Caco-2 (cell line): ENCODE measurements at regions of chr6 and their contacts with region 1.

Region 1: DNA sequence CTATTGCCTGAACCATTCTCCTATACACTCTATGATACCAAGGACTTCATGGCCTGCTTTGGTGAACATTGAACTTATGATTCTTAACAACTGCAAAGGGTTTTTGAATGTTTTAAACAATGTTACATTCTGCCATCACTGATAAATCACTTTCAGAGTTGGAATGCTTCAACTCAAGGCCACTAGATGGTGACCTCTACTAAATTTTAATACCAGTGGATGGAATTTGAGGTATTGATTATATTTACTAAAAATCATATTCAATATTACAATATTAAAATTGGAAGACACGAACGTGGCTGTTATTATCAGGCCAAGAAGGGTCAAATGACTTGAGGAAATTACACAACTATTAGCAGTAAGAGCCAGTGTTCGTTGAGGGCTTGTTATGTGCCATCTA is 18.6 kb downstream of the MYCT1 start:
- DNase-seq: no peak
- H3K4me3 ChIP-seq: no peak overlapping the region
- H3K4me3 Mint-ChIP-seq: no peak overlapping the region
- H3K27ac Mint-ChIP-seq: no peak overlapping the region
- H3K4me1 ChIP-seq: no peaks in the 10 kb centered on the region
- H3K4me1 Mint-ChIP-seq: no peaks in the 10 kb centered on the region
- H3K27me3 ChIP-seq: no peaks in the 10 kb centered on the region
- H3K27me3 Mint-ChIP-seq: no peaks in the 10 kb centered on the region
- CTCF ChIP-seq: no peak

Region 2: DNA sequence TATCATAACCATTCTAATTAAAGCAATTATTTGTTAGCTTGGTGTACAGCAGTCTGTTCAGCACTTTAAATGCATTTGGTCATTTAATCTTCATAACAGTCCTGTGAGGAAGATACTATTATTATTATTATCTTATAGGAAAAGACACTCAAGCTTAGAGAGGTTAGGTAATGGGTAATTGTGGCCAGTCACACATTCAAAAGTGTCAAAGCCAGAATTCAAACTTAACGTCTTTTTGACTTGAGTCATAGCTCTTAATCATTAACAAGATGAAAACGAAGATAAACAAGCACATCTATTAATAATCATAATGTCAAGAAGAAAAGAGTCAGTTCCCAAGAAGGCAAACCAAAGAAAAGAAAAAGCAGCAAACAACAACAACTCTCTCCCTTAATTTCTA is 330.2 kb before region 1 on chr6:
- CTCF ChIA-PET with region 1: no interaction called
- POLR2A ChIA-PET with region 1: no interaction called
- intact Hi-C with region 1: no loop called
- DNase-seq: no peak
- H3K4me3 ChIP-seq: no peak overlapping the region
- H3K4me3 Mint-ChIP-seq: no peak overlapping the region
- H3K27ac Mint-ChIP-seq: no peak overlapping the region
- H3K4me1 ChIP-seq: peaks cover 7% of the 10 kb centered on the region; the same call in 1 of the 2 replicates
- H3K4me1 Mint-ChIP-seq: no peaks in the 10 kb centered on the region
- H3K27me3 ChIP-seq: no peaks in the 10 kb centered on the region
- H3K27me3 Mint-ChIP-seq: peaks cover 9% of the 10 kb centered on the region
- CTCF ChIP-seq: no peak

Region 3: GRCh38 chr6:152661776-152662175 is 54.5 kb before region 1 on chr6:
- CTCF ChIA-PET with region 1: no interaction called
- POLR2A ChIA-PET with region 1: no interaction called
- intact Hi-C with region 1: no loop called
- DNase-seq: no peak
- H3K4me3 ChIP-seq: no peak overlapping the region
- H3K4me3 Mint-ChIP-seq: no peak overlapping the region
- H3K27ac Mint-ChIP-seq: no peak overlapping the region
- H3K4me1 ChIP-seq: no peaks in the 10 kb centered on the region
- H3K4me1 Mint-ChIP-seq: no peaks in the 10 kb centered on the region
- H3K27me3 ChIP-seq: no peaks in the 10 kb centered on the region
- H3K27me3 Mint-ChIP-seq: peaks cover 15% of the 10 kb centered on the region
- CTCF ChIP-seq: no peak

Region 4: DNA sequence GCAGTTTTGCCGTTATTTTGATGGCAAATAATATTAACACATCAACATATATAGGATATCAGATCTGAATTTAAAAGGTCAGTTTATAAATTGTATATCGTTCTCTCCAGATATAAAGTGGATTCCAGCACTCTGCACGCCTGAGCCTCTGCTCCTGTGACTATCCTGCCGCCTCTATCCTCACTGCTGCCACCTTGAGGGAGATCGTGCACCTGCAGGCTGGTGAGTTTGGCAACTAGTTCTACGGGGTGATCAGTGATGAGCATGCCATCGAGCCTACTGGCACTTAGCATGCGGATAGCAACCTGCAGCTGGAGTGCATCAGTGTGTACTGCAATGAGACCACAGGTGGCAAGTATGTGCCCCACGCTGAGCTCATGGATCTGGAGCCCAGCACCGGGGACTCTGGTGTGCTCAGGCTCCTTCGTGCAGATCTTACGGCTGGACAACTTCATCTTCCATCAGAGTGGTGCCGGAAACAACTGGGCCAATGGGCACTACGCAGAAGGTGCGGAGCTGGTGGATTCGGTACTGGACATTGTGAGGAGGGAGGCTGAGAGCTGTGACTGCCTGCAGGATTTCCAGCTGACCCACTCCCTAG is 181.6 kb after region 1 on chr6:
- CTCF ChIA-PET with region 1: no interaction called
- POLR2A ChIA-PET with region 1: no interaction called
- intact Hi-C with region 1: loop called (anchors 5 kb)
- DNase-seq: peak; percentile 65 to 82
- H3K4me3 ChIP-seq: no peak overlapping the region
- H3K4me3 Mint-ChIP-seq: no peak overlapping the region
- H3K27ac Mint-ChIP-seq: no peak overlapping the region
- H3K4me1 ChIP-seq: no peaks in the 10 kb centered on the region
- H3K4me1 Mint-ChIP-seq: no peaks in the 10 kb centered on the region
- H3K27me3 ChIP-seq: no peaks in the 10 kb centered on the region
- H3K27me3 Mint-ChIP-seq: peaks cover 14% of the 10 kb centered on the region
- CTCF ChIP-seq: peak; percentile 79 to 88